ENCODE measurements at regions of chr17 and their contacts with region 1.

Region 1: DNA sequence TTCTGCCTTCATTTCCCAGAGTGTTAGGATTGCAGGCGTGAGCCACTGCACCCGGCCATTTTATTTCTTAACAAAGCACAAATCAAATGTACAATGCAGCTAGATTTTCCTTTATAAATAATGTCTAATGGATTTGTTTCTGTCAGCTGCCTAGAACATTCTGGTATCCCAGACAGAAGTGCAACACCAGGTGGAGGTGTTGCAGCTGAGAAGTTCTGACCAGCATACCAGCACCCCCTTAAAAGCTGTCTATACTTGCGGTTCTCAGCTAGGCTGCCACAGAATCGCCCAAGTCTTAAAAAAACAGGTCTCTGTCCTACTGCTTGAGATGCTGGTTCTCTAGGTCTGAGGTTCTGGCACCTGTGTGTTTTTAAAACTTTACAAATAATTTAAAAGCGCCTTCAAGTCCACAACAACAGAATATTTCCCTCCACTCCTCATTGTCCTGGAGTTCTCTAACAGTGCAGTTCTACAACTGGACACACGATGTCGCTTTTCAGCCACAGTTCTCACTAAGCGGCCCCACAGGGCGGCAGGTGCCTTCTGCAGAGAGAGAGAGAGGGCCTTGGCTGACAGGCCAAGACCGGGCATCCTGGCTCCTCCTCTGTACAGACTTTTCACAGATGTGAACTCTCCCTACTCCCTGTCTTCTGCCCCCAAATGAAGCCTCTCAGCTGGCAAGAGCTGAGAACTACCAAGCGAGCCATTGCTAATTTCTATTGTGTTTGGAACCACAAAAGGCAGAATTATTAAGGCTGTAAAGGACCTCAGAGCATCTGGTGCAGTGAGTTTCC is 32.6 kb upstream of the MEOX1 start:
- DNase-seq: no peak
- H3K4me3 ChIP-seq: no peak overlapping the region
- H3K27me3 ChIP-seq: peaks cover 9% of the 10 kb centered on the region
- CTCF ChIP-seq: peak; percentile 87

Region 2: DNA sequence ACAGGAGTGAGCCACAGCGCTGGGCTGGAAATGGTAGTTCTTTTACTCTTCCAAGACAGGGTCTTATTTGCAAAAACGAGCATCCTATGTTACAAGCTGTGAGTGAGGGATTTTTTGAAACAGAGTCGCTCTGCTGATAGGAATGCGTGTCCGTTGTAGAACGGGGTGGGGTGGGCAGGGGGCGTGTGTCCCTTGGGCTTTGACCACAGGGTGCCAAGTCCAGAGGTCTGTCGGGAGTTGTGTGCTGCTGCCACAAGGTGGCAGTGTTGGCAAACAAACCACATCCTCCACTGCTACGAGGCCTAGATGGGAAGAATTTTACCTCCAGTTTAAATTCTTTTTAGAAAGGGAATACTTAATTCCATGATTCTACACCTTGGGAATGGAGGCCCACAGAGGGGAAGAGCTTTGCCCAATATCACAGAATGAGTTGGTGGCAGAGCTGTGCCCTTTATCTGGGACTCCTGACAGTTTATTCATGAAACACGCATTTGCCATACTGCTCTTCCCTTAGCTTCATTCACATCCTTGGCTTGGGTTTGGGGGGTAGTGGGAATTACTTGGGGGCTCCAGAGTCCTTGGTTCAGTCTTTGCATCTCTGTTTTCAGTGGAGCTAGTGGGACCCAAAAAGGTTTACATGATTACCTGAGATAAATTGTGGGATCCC is 117.6 kb before region 1 on chr17:
- CTCF ChIA-PET with region 1: interaction called, 34 read pairs
- POLR2A ChIA-PET with region 1: no interaction called
- DNase-seq: no peak
- H3K4me3 ChIP-seq: no peak overlapping the region
- H3K27me3 ChIP-seq: peaks cover 1% of the 10 kb centered on the region; the same call in 1 of the 2 replicates
- CTCF ChIP-seq: peak; percentile 90

Region 3: DNA sequence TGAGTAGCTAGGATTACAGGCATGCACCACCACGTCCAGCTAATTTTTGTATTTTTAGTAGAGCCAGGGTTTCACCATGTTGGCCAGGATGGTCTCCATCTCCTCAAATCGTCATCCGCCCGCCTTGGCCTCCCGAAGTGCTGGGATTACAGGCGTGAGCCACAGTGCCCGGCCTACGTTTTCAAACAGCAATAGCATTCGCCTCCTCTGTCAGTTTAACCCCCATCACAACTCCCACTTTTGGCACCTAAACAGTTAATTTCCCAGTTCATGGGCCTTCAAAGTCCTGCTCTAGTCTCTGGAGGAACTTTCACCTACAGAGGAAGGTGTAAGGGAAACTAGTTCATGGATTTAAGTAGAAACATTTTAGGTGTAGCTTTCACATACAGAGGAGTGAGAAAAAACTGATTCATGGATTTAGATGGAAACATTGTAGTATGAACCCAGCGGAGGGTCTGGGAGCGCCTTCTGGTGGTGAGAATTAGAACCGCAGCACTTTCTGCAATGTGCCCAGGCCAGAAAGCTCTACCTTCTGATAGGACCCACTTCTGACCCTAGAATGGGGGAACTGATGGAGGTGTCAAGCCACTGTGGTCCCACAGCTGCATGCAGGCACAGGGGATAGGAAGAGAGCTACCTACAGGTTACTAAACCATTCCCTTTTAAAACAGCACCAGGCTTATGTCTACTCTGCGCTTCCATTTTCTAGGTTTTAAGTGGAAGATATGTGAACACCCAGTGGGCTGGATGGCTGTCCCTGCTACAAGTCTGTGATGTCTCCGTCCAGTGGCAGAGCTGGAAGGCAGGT is 20.6 kb before region 1 on chr17:
- CTCF ChIA-PET with region 1: interaction called, 14 read pairs
- POLR2A ChIA-PET with region 1: no interaction called
- DNase-seq: no peak
- H3K4me3 ChIP-seq: no peak overlapping the region
- H3K27me3 ChIP-seq: no peaks in the 10 kb centered on the region
- CTCF ChIP-seq: peak; percentile 96

Region 4: DNA sequence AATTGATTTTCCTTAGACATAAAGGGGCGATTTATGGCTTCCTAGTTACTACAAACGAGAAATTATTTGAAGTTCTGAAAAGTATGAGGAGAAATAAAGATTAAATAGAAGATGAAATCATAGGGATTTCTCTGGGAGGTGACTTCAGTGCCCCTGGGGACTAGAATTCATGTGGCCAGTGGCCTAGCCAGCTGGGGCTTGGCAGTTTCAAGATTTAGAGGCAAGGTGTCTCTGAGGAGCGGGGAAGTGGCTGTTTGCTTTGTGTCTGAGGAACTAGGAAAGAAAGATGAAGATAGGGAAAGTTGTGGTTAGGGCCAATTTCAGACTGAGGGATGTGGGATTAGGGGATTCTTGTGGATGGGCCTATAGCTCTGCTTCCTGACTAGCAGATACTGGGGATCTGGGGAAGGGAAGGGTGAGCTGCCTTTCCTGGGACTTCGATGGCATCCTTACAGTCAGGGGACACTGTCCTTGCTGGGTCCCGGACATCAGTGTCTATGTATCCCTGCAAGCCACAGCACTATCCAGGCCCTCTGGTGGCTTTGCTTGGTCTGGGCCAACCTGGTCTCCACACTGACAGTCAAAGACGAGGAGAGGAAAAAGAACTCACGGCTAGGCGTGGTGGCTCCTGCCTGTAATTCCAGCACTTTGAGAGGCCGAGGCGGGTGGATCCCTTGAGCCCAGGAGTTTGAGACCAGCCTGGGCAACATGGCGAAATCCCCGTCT is 10.2 kb before region 1 on chr17:
- CTCF ChIA-PET with region 1: interaction called, 24 read pairs
- POLR2A ChIA-PET with region 1: no interaction called
- DNase-seq: no peak
- H3K4me3 ChIP-seq: no peak overlapping the region
- H3K27me3 ChIP-seq: peaks cover 12% of the 10 kb centered on the region
- CTCF ChIP-seq: no peak

Region 5: DNA sequence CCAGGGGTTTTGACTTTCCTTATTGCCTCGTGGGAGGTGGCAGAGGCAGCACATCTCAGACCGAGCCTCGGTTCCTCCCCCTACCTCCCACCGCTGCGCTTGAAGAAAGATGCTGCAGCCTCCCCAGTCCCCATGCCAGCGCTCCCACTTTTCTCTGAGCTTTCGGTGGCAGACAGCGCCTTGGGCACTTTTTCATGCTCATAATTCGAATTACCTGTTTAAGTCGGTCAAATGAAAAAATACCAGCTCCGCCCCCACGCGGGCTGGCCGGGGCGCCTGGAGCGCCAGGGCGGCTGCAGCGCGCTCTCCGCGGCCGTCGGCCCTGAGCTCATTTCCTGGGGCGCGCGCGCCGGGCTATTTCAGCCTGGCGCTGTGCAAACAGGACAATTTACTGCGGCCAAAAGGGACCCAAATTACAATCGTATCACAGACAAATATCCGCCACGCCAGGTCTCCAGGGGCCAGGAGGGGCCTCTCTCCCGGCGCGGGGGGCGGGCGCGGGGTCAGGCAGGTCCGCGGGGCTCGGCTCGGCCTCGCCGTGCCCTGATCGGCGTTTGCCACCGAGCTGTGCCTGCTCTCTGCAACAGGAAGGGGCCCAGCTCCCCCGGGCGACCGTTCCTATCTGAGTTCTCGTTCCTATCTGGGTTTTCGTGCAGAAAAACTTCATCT is 19.4 kb after region 1 on chr17:
- CTCF ChIA-PET with region 1: interaction called, 50 read pairs
- POLR2A ChIA-PET with region 1: no interaction called
- DNase-seq: no peak
- H3K4me3 ChIP-seq: peak overlapping the region; percentile 44
- H3K27me3 ChIP-seq: no peaks in the 10 kb centered on the region
- CTCF ChIP-seq: no peak

Region 6: DNA sequence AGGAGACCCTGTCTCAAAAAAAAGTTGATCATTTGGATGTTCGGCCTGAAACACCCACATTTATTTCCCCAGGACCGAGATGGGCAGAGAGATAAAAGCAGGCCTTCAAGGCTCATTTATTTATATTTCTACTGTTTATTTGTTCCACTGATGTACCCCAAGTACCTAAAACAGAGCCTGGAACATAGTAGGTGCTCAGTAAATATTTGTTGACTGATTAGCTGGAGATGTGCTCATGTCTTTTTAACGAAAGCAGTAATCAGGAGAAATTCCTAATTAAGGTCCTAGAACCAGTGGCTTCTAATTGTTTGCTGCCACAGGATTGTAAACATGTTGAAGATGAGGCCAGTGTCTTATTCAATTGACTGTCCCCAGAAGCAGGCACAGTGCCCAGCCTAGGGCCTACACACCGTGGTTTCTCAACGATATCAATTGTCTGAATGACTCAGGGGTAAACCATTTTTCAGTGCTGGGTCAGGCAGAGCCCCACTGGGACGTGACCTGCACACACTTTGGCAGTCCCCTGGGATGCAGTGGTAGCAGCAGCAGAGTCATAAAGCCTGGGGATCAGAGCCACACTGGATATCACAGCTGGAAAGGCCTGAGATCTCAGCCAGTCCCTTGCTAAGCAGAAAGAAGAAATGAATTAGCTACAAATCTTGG is 29.6 kb after region 1 on chr17:
- CTCF ChIA-PET with region 1: interaction called, 13 read pairs
- POLR2A ChIA-PET with region 1: no interaction called
- DNase-seq: no peak
- H3K4me3 ChIP-seq: no peak overlapping the region
- H3K27me3 ChIP-seq: no peaks in the 10 kb centered on the region
- CTCF ChIP-seq: no peak

Region 7: DNA sequence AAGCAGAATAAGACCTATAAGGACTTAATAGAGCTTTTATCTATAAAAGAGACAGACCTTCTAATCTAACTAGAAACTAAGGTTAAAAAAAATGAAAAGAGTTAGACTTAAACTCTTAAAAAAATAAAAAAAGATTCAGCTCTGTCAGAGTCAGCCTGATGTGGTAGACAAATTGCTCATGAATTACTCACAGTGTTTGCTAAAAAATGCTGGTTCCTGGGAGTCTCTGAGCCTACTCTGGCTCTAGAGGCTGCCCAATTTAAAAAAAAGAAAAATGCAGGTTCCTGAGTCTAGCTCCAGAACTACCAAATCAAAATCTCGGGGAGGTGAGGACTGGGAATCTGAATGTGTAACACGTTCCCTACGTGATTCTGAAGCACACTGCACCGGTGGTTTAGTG is 46.3 kb after region 1 on chr17:
- CTCF ChIA-PET with region 1: interaction called, 16 read pairs
- POLR2A ChIA-PET with region 1: no interaction called
- DNase-seq: no peak
- H3K4me3 ChIP-seq: no peak overlapping the region
- H3K27me3 ChIP-seq: no peaks in the 10 kb centered on the region
- CTCF ChIP-seq: no peak

Region 8: DNA sequence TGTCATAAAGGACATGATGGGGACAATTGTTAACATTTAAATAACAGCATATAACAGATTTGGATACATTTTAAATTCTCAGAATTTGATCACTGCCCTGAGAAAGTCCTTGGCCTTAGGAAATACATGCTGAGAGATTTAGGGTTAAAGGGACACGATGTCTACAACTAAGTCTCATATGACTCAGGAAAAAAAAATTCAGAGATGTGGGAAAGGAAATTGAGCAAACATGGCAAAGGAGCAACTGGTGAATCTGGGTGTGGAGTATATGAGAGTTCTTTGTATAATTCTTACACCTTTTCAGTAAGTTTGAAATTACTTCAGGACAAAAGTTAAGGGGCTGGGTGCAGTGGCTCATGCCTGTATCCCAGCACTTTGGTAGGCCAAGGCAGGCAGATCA is 120.4 kb after region 1 on chr17:
- CTCF ChIA-PET with region 1: no interaction called
- POLR2A ChIA-PET with region 1: no interaction called
- DNase-seq: peak; percentile 53
- H3K4me3 ChIP-seq: no peak overlapping the region
- H3K27me3 ChIP-seq: no peaks in the 10 kb centered on the region
- CTCF ChIP-seq: no peak